ENCODE measurements at regions of chr1 and their contacts with region 1.

Region 1: GRCh38 chr1:116737020-116737854 is 17.0 kb upstream of the CD2 start:
- DNase-seq: peak; percentile 60 to 89 (median 75)
- ATAC-seq: peak; percentile 60
- H3K4me3 ChIP-seq: peak overlapping the region; percentile 23 to 25
- H3K4me3 Mint-ChIP-seq: peak overlapping the region; percentile 67
- H3K27ac ChIP-seq: peak overlapping the region; percentile 59 to 92
- H3K27ac Mint-ChIP-seq: peak overlapping the region; percentile 96
- H3K4me1 ChIP-seq: peaks cover 30% of the 10 kb centered on the region
- H3K4me1 Mint-ChIP-seq: peaks cover 44% of the 10 kb centered on the region
- H3K27me3 ChIP-seq: no peaks in the 10 kb centered on the region
- H3K27me3 Mint-ChIP-seq: no peaks in the 10 kb centered on the region
- CTCF ChIP-seq: peak; percentile 87

Region 2: GRCh38 chr1:116472431-116472961 is 264.7 kb before region 1 on chr1:
- CTCF ChIA-PET with region 1: no interaction called
- POLR2A ChIA-PET with region 1: no interaction called
- intact Hi-C with region 1: no loop called
- DNase-seq: no peak
- ATAC-seq: no peak
- H3K4me3 ChIP-seq: no peak overlapping the region
- H3K4me3 Mint-ChIP-seq: no peak overlapping the region
- H3K27ac ChIP-seq: no peak overlapping the region
- H3K27ac Mint-ChIP-seq: no peak overlapping the region
- H3K4me1 ChIP-seq: no peaks in the 10 kb centered on the region
- H3K4me1 Mint-ChIP-seq: no peaks in the 10 kb centered on the region
- H3K27me3 ChIP-seq: no peaks in the 10 kb centered on the region
- H3K27me3 Mint-ChIP-seq: no peaks in the 10 kb centered on the region
- CTCF ChIP-seq: no peak

Region 3: DNA sequence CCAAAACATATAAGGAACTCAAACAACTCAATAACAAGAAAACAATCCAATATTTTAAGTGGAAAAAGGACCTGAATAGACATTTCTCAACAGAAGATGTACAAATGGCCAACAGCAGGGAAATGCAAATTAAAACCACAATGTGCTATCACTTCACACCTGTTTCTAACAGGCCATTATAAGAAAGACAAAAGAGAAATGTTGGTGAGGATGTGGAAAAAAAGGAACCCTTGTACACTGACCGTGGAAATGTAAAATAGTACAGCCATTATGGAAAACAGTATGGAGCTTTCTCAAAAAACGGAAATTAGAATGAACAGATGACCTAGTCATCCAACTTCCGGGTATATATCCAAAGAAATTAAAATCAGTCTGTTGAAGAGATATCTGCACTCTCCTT is 20.8 kb before region 1 on chr1:
- CTCF ChIA-PET with region 1: no interaction called
- POLR2A ChIA-PET with region 1: no interaction called
- intact Hi-C with region 1: no loop called
- DNase-seq: no peak
- ATAC-seq: no peak
- H3K4me3 ChIP-seq: no peak overlapping the region
- H3K4me3 Mint-ChIP-seq: no peak overlapping the region
- H3K27ac ChIP-seq: no peak overlapping the region
- H3K27ac Mint-ChIP-seq: no peak overlapping the region
- H3K4me1 ChIP-seq: no peaks in the 10 kb centered on the region
- H3K4me1 Mint-ChIP-seq: no peaks in the 10 kb centered on the region
- H3K27me3 ChIP-seq: no peaks in the 10 kb centered on the region
- H3K27me3 Mint-ChIP-seq: no peaks in the 10 kb centered on the region
- CTCF ChIP-seq: no peak

Region 4: DNA sequence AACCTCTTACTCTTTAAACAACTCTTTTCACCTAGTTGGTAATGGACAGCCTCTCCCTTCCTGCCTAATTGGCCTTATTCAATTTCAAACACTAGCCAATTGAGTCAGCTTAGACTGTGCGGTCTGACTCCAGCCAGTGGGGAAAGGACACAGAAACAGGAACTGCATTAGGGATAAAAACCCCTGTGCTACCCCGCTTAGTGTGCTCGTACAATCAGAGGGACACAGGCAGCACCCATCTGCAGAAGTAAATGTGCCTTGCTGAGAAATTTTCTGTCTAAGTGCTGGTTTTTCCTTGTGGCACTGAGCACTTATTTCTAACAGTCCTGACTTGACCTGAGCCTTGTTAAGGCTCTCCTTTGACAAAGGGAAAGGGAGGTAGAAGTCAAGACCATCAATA is 11.0 kb after region 1 on chr1:
- CTCF ChIA-PET with region 1: interaction called, 45 read pairs
- POLR2A ChIA-PET with region 1: interaction called, 45 read pairs
- intact Hi-C with region 1: no loop called
- DNase-seq: no peak
- ATAC-seq: no peak
- H3K4me3 ChIP-seq: no peak overlapping the region
- H3K4me3 Mint-ChIP-seq: no peak overlapping the region
- H3K27ac ChIP-seq: peak overlapping the region in 1 of 2 experiments; percentile 12
- H3K27ac Mint-ChIP-seq: no peak overlapping the region
- H3K4me1 ChIP-seq: peaks cover 13% of the 10 kb centered on the region
- H3K4me1 Mint-ChIP-seq: peaks cover 23% of the 10 kb centered on the region
- H3K27me3 ChIP-seq: no peaks in the 10 kb centered on the region
- H3K27me3 Mint-ChIP-seq: no peaks in the 10 kb centered on the region
- CTCF ChIP-seq: no peak

Region 5: DNA sequence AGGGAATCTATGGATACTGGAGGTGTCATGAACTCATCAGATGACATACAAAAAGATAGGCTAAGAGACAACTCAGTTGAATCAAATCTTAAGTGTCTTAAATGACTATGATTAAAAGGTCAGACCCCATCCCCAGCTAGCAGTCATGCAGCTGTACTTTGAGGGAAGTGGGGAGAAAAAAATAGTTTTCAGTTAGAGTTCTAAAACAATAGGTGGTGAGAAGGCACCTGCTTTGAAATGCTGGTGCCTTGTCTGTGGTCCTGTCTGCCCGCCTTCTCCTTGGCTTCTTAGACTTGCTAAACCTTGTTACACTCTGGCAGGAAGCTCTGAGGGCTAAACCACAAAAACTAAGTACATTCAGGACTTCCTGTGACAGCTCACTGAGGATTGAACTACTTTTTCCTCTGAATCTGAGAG is 32.3 kb after region 1 on chr1:
- CTCF ChIA-PET with region 1: interaction called, 203 read pairs
- POLR2A ChIA-PET with region 1: interaction called, 130 read pairs
- intact Hi-C with region 1: loop called (anchors 1 kb)
- DNase-seq: peak in 8 of 9 experiments; percentile 44 to 94 (median 76)
- ATAC-seq: peak; percentile 75
- H3K4me3 ChIP-seq: peak overlapping the region in 1 of 2 experiments; percentile 14
- H3K4me3 Mint-ChIP-seq: peak overlapping the region; percentile 55
- H3K27ac ChIP-seq: peak overlapping the region; percentile 42 to 87
- H3K27ac Mint-ChIP-seq: peak overlapping the region; percentile 96
- H3K4me1 ChIP-seq: peaks cover 83% of the 10 kb centered on the region
- H3K4me1 Mint-ChIP-seq: peaks cover 86% of the 10 kb centered on the region
- H3K27me3 ChIP-seq: no peaks in the 10 kb centered on the region
- H3K27me3 Mint-ChIP-seq: no peaks in the 10 kb centered on the region
- CTCF ChIP-seq: no peak

Region 6: GRCh38 chr1:116826818-116827606 is 89.8 kb after region 1 on chr1:
- CTCF ChIA-PET with region 1: interaction called, 13 read pairs
- POLR2A ChIA-PET with region 1: interaction called, 3 read pairs
- intact Hi-C with region 1: no loop called
- DNase-seq: peak in 5 of 9 experiments; percentile 18 to 54 (median 37)
- ATAC-seq: peak; percentile 71
- H3K4me3 ChIP-seq: no peak overlapping the region
- H3K4me3 Mint-ChIP-seq: no peak overlapping the region
- H3K27ac ChIP-seq: no peak overlapping the region
- H3K27ac Mint-ChIP-seq: peak overlapping the region; percentile 21
- H3K4me1 ChIP-seq: peaks cover 4% of the 10 kb centered on the region
- H3K4me1 Mint-ChIP-seq: peaks cover 13% of the 10 kb centered on the region
- H3K27me3 ChIP-seq: no peaks in the 10 kb centered on the region
- H3K27me3 Mint-ChIP-seq: no peaks in the 10 kb centered on the region
- CTCF ChIP-seq: no peak

Region 7: DNA sequence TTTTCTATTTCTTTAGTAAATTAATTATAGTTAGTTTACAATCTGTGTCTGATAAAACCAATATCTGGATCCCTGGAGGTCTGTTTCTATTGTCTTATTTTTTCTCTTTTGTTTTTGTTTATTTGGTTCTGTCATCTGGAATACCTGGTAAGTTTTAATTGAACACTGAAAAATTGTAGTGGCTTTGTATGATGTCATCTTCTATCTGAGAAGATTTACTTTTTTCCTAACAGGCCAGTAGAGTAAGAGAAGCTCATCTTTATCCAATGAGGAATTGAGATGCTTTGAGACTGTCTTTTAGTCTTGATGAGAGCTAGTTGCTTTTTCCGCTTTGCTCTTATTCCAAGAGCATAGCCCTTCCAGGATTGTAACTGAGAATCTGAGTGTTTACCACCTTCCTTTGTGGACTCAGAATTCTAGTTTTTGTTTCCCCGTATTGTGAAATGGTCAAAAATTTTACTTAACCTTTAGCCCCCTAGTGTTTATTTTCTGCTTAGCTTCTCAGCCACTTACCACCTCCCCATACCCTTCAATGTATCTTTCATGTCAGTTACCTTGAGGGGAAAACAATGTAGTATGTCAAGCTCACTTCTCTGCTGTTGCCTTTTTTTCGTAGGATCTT is 197.5 kb after region 1 on chr1:
- CTCF ChIA-PET with region 1: interaction called, 16 read pairs
- POLR2A ChIA-PET with region 1: no interaction called
- intact Hi-C with region 1: loop called (anchors 5 kb)
- DNase-seq: peak in 2 of 9 experiments; percentile 43 to 58
- ATAC-seq: peak; percentile 21
- H3K4me3 ChIP-seq: no peak overlapping the region
- H3K4me3 Mint-ChIP-seq: no peak overlapping the region
- H3K27ac ChIP-seq: no peak overlapping the region
- H3K27ac Mint-ChIP-seq: no peak overlapping the region
- H3K4me1 ChIP-seq: peaks cover 22% of the 10 kb centered on the region
- H3K4me1 Mint-ChIP-seq: peaks cover 23% of the 10 kb centered on the region
- H3K27me3 ChIP-seq: no peaks in the 10 kb centered on the region
- H3K27me3 Mint-ChIP-seq: no peaks in the 10 kb centered on the region
- CTCF ChIP-seq: peak; percentile 32

Region 8: DNA sequence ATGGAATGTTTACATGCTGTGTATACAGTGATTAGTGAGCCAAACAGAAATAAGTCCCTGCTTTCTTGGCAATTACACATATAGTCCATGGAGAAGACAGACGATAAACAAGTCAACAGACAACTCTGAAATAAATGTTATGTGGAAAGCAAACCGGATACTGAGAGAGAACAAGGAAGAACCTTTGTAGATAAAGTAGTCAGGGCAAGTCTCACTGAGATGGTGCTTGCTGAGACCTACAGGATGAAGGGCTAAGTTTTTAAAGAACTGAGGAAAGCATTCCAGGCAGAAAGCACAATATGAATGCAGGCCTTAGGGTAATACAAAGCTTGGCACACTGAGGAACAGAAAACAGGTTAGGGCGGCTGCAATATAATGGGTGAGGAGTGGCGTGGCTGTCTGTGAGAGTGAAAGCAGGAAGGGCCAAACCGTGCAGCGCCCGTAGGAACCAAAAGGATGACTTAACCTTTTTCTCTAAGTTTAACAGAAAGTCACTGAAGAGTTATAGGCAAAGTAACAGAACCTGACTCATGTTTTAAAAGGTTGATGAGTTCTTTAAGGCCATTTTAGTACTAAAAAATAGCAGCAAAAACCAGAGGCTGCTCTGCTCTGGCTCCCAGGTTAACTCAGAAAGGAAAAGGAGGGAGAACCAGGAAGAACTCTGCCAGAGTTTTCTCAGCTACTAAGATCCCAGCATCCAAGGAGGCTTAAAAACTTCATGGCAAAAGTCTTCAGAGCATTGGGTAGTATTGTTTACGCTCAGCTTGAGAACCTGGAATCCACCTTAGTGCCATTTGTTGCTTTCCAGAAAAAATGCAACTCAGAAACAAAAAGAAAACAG is 314.2 kb after region 1 on chr1:
- CTCF ChIA-PET with region 1: interaction called, 53 read pairs
- POLR2A ChIA-PET with region 1: no interaction called
- intact Hi-C with region 1: loop called (anchors 1 kb)
- DNase-seq: peak in 6 of 9 experiments; percentile 18 to 63 (median 34)
- ATAC-seq: peak; percentile 13
- H3K4me3 ChIP-seq: peak overlapping the region; percentile 7 to 23
- H3K4me3 Mint-ChIP-seq: peak overlapping the region; percentile 72
- H3K27ac ChIP-seq: peak overlapping the region in 1 of 2 experiments; percentile 52
- H3K27ac Mint-ChIP-seq: peak overlapping the region; percentile 87
- H3K4me1 ChIP-seq: peaks cover 49% of the 10 kb centered on the region
- H3K4me1 Mint-ChIP-seq: peaks cover 68% of the 10 kb centered on the region
- H3K27me3 ChIP-seq: no peaks in the 10 kb centered on the region
- H3K27me3 Mint-ChIP-seq: no peaks in the 10 kb centered on the region
- CTCF ChIP-seq: no peak

Region 9: DNA sequence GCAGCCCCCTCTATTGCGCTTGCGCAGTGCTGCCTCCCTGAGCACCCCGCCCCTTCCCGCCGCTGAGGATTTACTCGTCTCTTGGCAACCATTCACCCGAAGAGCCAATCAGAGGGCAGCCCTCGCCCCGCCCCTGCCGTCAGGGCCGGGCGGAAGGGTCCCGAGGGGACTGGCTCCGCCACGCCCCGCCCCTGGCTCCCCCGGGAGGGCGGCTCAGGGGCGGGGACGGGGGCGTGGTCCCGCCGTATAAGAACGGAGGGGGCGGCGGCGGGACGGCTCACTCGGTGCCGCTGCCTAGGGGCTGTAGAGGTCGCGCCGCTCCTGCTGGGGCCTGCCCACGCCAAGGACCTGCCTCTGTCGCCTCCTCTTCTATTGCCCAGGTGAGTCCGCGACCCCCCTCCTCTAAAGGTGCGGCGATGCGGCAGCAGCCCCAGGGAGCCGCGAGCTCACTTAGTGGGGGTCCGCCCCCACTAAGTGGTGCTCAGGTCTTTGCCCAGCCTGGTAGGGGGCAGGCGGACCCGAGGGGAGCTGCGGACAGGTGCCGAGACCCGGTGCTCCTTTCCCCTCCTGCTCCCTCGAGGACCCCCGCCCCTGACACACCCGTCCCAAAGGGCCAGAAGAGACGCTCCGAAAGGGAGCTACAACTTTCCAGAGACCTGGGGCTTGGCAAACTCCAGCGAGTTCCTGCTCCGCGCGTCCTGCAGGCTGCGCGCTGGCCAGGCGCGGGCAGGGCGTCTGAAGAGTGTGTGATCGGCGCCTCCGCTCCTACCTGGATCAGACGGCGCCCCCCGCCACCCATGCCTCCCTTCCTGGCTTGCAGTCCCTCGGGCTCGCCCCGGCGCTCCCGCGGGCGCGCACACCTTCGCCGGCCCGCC is 868.8 kb after region 1 on chr1 and contains the start of gene TENT5C:
- CTCF ChIA-PET with region 1: no interaction called
- POLR2A ChIA-PET with region 1: no interaction called
- intact Hi-C with region 1: loop called in 1 of 2 experiments (anchors 10 kb)
- DNase-seq: peak; percentile 96 to 99 (median 99)
- ATAC-seq: peak; percentile 91
- H3K4me3 ChIP-seq: peak within 1 kb of the TSS; percentile 91 to 93
- H3K4me3 Mint-ChIP-seq: peak within 1 kb of the TSS; percentile 100
- H3K27ac ChIP-seq: peak within 1 kb of the TSS; percentile 95
- H3K27ac Mint-ChIP-seq: peak within 1 kb of the TSS; percentile 97
- H3K4me1 ChIP-seq: peaks cover 16% of the 10 kb centered on the region
- H3K4me1 Mint-ChIP-seq: peaks cover 36% of the 10 kb centered on the region
- H3K27me3 ChIP-seq: no peaks in the 10 kb centered on the region
- H3K27me3 Mint-ChIP-seq: no peaks in the 10 kb centered on the region
- CTCF ChIP-seq: no peak
- total RNA-seq, gene TENT5C: 146 to 150 TPM